ENCODE measurements at regions of chr7 and their contacts with region 1.

Region 1: GRCh38 chr7:1305873-1306272 is 73.2 kb downstream of the UNCX start:
- DNase-seq: no peak
- H3K4me3 ChIP-seq: no peak overlapping the region
- H3K27ac ChIP-seq: no peak overlapping the region
- H3K4me1 ChIP-seq: no peaks in the 10 kb centered on the region
- H3K27me3 ChIP-seq: peaks cover 0 to 29% of the 10 kb centered on the region in 2 donors
- CTCF ChIP-seq: no peak
- POLR2A ChIP-seq: no peak

Region 2: DNA sequence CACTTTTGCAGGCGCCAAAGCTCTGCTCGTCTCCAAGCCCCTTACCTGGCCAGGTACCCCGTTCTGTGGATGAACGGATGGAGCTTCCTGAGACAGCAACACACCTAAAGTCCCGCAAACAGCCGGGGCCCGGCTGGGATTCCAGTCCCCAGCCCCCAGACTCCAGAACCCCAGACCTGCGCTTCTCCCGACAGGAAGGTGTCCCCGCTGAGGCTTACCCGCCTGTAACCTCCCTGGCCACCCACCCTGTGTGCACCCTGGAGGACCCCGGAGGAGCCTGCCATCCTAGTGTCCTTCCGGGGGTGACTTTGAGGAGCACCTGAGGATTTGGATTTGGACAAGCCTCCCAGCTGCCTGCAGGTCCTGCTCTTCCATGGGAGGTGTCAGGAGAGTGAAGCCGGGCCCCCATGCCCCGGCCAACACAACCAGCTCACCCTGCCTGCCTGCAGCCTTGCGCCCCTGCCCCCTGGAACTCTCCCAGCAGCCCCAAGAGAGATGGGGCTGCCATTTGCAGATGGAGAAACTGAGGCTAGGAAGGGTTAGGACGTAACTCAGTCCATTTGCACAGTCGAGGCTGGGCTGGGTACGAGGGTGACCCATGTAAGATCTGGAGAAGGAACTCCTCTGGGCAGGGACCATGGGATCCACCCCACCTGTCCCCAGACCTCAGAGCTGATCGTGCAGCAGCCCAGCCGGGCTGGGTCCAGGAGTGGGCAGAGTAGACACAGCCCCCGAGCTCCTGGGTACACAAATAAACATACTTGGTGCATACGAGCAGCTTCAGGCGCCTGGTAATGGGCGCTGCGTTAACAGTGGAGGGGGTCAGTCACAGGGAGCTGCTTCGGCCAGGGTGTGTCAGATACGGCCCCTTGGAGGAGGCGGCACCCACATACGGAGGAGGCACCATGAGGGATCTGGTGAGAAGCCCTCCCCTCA is 41.3 kb before region 1 on chr7:
- intact Hi-C with region 1: loop called (anchors 1 kb)
- DNase-seq: no peak
- H3K4me3 ChIP-seq: no peak overlapping the region
- H3K27ac ChIP-seq: no peak overlapping the region
- H3K4me1 ChIP-seq: no peaks in the 10 kb centered on the region
- H3K27me3 ChIP-seq: peaks cover 3 to 88% of the 10 kb centered on the region in 2 donors
- CTCF ChIP-seq: no peak
- POLR2A ChIP-seq: no peak

Measured in breast epithelium (tissue), 4 donors.